Right ventricle myocardium inferior (tissue), 1 donor: ENCODE measurements at regions of chr18 and their contacts with region 1.

Region 1: GRCh38 chr18:76492669-76493212 is 2.3 kb downstream of the ZNF516 start:
- DNase-seq: peak; percentile 100
- ATAC-seq: peak; percentile 95

Region 2: DNA sequence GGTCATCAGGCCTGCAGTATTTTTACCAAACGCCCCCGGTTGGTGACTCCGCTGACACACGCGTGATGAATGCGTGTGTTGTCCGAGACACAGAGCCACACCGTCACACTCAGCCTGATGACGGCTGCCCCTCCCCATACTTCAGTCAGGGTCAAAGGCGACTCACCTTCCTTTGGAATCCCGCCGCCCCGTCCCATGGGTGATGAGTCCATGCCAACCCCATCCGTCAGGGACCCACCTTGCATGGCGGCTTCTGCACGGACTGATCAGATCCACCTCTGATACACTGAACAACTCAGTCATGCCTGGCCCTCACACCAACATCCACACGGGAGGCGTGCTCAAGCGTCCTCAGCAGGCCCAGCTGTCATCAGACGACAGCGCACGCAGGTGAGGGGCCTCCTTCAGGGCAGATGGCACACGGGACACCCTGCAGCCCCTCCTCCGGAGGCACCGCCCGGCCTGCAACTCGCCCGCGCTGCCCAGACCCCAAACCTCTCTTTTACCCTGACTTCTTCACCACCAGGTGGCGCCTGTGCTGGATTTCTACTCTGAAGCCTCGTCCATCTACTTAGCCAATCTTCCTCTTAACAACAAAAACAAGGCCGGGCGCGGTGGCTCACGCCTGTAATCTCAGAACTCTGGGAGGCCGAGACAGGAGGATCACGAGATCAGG is 86.9 kb before region 1 on chr18:
- intact Hi-C with region 1: loop called (anchors 5 kb)
- DNase-seq: peak; percentile 73
- ATAC-seq: peak; percentile 35

Region 3: GRCh38 chr18:76450452-76451395 is 42.0 kb before region 1 on chr18:
- intact Hi-C with region 1: loop called (anchors 2 kb)
- DNase-seq: no peak
- ATAC-seq: peak; percentile 69

Region 4: GRCh38 chr18:76620321-76621170 is 127.8 kb after region 1 on chr18:
- intact Hi-C with region 1: loop called (anchors 5 kb)
- DNase-seq: peak; percentile 92
- ATAC-seq: peak; percentile 81

Region 5: DNA sequence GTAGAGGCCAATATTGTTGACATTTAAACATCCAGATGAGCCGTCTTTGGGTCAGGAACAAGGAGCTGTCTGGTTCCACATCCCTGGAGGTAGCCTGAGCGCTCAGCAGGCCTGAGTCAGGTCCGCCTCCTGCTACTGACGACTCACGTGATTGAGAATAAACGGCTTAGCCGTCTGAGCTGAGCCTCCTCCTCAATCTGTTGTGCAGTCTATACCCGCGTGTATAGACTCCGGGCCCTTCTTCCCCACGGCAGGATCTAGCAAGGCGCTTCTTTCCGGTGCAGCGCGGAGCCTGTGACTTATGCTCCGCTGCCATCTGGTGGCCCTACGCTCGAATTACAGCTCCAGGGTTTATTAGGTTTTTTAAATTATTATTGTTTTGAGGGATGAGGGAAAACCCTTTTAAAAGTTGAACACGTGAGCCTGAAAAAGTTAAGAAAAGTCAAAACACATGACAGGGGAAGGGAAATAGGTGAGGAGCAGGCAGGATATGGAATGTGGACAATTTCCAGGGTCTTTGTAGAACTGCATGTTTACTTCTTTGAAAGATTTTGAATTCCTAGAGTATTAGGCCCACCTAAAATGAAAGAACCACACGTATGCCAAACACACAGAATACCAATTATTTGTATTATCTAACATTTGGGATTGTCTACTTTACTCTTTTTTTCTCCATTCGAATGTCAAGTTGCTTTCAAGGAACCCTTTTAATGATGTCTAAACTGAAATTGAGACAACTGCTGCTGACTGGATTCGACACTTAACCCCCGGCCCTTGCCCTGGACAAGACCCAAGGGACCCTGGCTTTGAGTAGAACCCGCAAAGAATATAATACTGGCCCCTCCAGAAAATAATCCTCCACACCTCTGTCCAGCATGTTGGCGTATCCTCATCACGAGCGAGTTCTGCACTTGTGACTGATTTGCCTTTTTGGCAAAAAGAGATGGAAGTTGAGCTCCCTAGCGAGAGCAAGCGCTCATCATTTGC is 217.2 kb after region 1 on chr18:
- intact Hi-C with region 1: loop called (anchors 10 kb)
- DNase-seq: peak; percentile 89
- ATAC-seq: peak; percentile 80